Breast epithelium (tissue), 4 donors: ENCODE measurements at regions of chr22 and their contacts with region 1.

Region 1: GRCh38 chr22:50600967-50601668 is 525 bp downstream of the MAPK8IP2 start:
- DNase-seq: no peak
- H3K4me3 ChIP-seq: peak overlapping the region; percentile 34 to 75 (median 55)
- H3K27ac ChIP-seq: no peak overlapping the region
- H3K4me1 ChIP-seq: peaks cover 4 to 5% of the 10 kb centered on the region in 2 donors
- H3K27me3 ChIP-seq: peaks cover 0 to 7% of the 10 kb centered on the region in 2 donors
- CTCF ChIP-seq: no peak
- POLR2A ChIP-seq: no peak

Region 2: GRCh38 chr22:50627642-50628542 is 26.8 kb after region 1 on chr22 and contains the start of gene ARSA:
- intact Hi-C with region 1: loop called (anchors 1 kb)
- DNase-seq: peak; percentile 77 to 86
- H3K4me3 ChIP-seq: peak within 1 kb of the TSS; percentile 70 to 83 (median 73)
- H3K27ac ChIP-seq: peak within 1 kb of the TSS; percentile 81 to 88
- H3K4me1 ChIP-seq: peaks cover 0 to 13% of the 10 kb centered on the region in 2 donors
- H3K27me3 ChIP-seq: no peaks in the 10 kb centered on the region
- CTCF ChIP-seq: no peak
- POLR2A ChIP-seq: no peak
- total RNA-seq, gene ARSA: 23.8 to 39.0 (median 36.3) TPM